GM10248 (cell line): ENCODE measurements at regions of chr3 and their contacts with region 1.

Region 1: GRCh38 chr3:87333393-87333892 is 57.1 kb upstream of the POU1F1 start:
- DNase-seq: no peak
- CTCF ChIP-seq: no peak

Region 2: DNA sequence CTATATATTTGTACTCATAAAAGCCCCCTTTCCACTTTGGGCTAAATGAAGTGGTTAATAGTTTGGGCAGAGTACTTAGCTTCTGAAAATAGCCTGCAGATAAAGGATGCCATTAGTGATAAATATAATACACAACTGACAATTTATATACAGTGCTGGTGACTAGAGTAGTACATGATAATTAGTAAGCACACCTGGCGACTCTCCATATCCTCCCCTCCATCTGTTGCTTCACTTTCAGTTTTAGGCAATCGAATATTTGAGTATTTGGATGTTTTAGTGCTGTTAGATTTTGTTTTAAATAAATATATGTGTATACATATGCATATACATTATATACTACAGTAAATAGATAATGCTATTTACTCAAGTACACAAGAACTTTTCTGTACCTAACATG is 142.3 kb before region 1 on chr3:
- CTCF ChIA-PET with region 1: no interaction called
- POLR2A ChIA-PET with region 1: no interaction called
- DNase-seq: no peak
- CTCF ChIP-seq: no peak

Region 3: GRCh38 chr3:87311309-87311708 is 22.1 kb before region 1 on chr3:
- CTCF ChIA-PET with region 1: no interaction called
- POLR2A ChIA-PET with region 1: no interaction called
- DNase-seq: no peak
- CTCF ChIP-seq: no peak

Region 4: GRCh38 chr3:87350364-87351199 is 17.1 kb after region 1 on chr3:
- CTCF ChIA-PET with region 1: interaction called, 13 read pairs
- POLR2A ChIA-PET with region 1: no interaction called
- DNase-seq: peak; percentile 53
- CTCF ChIP-seq: peak; percentile 81